Breast epithelium (tissue), 4 donors: ENCODE measurements at regions of chr20 and their contacts with region 1.

Region 1: DNA sequence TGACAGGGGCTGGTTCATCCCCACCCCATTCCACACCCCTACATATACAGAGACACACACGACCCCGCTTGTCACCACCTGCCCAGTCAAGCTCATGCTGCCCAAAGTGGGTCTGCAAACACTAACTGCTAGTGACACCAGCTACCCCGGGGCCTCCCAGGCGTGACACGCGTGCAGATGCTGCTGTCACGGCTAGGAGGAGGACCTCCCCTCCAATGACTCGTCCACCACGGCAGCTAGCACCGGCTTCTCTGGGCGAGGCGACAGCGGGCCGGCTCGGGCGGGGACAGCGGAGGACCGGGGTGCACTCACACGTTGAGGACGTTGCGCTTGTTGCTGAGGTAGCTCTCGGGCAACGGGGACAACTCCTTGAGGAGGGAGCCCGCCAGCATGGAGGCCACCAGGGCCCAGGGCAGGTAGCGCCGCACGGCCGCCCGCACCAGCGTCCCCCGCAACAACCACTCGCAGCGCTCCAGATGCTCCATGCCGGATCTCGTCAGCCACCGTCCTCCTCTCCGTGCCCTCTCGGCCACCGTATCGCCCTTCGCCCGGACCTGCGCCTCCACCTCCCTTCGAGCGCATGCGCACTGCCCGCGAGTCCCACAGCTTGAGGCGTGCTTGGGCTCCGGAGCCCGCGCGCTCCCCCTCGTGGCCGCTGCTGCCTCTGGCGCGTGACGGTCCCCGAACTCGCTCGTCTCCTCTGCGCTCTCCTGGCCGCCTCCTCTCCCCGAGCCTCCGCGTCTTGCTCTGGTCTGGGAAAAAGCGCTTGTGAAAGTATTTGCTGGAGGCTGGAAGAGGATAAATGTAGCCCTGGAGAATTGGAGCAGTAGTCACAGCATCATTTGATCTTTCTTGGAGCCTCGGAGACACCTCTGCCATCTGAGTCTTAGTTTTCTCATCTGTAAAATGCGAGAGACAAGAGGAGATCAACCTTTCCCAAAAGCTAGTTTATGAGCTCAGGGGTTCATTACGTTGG is at the start of gene FITM2:
- DNase-seq: peak; percentile 95 to 98
- H3K4me3 ChIP-seq: peak within 1 kb of the TSS; percentile 63 to 97 (median 76)
- H3K27ac ChIP-seq: peak within 1 kb of the TSS; percentile 43 to 61
- H3K4me1 ChIP-seq: peaks cover 4 to 11% of the 10 kb centered on the region in 2 donors
- H3K27me3 ChIP-seq: no peaks in the 10 kb centered on the region
- CTCF ChIP-seq: peak; percentile 84 to 94 (median 93)
- POLR2A ChIP-seq: peak; percentile 18
- total RNA-seq, gene FITM2: 8.8 to 17.0 (median 9.2) TPM

Region 2: GRCh38 chr20:43844778-43845614 is 466.0 kb before region 1 on chr20:
- intact Hi-C with region 1: no loop called
- DNase-seq: peak in 1 of 2 donors; percentile 38
- H3K4me3 ChIP-seq: no peak overlapping the region
- H3K27ac ChIP-seq: peak overlapping the region in 1 of 2 donors; percentile 21
- H3K4me1 ChIP-seq: no peaks in the 10 kb centered on the region
- H3K27me3 ChIP-seq: peaks cover 0 to 4% of the 10 kb centered on the region in 2 donors
- CTCF ChIP-seq: no peak
- POLR2A ChIP-seq: no peak

Region 3: DNA sequence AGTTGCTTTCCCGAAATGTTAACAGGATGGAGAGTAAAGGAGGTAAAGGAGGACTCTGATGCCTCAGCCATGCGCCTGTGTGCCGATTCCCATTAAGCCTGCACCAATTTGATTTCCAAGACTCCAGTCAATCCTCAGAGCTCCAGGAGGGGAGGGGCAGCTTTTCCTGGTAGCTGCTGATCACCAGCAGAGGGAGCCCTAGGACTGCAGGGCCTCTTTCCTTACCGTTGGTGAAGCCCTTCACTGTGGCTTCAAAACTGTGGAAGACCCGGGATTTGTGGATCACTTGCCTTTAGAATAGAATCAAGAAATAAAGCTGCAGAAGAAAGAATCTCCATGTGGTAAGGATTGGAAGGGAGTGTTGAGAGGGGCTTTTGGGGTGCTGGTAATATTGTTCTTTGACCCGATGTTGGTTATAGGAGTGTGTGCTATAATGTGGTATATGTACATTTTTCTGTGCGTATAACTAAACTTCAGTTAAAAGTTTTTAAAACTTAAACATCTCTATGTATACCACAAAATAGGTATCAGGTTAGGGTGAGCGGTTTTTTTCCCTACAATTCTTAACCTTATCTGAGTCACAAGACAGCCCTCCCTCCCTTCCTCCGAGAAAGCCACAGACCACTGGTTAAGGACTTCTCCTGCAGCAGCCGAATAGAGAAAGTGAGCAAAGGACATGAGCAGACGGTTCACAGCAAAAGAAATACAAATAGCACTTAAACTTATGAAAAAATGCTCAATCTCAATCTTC is 93.4 kb before region 1 on chr20:
- intact Hi-C with region 1: loop called (anchors 5 kb)
- DNase-seq: peak; percentile 51 to 58
- H3K4me3 ChIP-seq: no peak overlapping the region
- H3K27ac ChIP-seq: no peak overlapping the region
- H3K4me1 ChIP-seq: no peaks in the 10 kb centered on the region
- H3K27me3 ChIP-seq: no peaks in the 10 kb centered on the region
- CTCF ChIP-seq: peak; percentile 35 to 79 (median 74)
- POLR2A ChIP-seq: no peak

Region 4: GRCh38 chr20:44398303-44398702 is 87.4 kb after region 1 on chr20:
- intact Hi-C with region 1: no loop called
- DNase-seq: no peak
- H3K4me3 ChIP-seq: no peak overlapping the region
- H3K27ac ChIP-seq: no peak overlapping the region
- H3K4me1 ChIP-seq: no peaks in the 10 kb centered on the region
- H3K27me3 ChIP-seq: no peaks in the 10 kb centered on the region
- CTCF ChIP-seq: no peak
- POLR2A ChIP-seq: no peak